Activated naive CD4-positive, alpha-beta T cell treated with anti-CD3 and anti-CD28 coated beads for 36 hours (primary cell): ENCODE measurements at regions of chr21 and their contacts with region 1.

Region 1: GRCh38 chr21:38913120-38913892 is 107.6 kb downstream of the ETS2 start:
- DNase-seq: peak; percentile 17
- H3K4me3 Mint-ChIP-seq: no peak overlapping the region
- H3K27ac Mint-ChIP-seq: no peak overlapping the region
- H3K4me1 Mint-ChIP-seq: peaks cover 7% of the 10 kb centered on the region
- H3K27me3 Mint-ChIP-seq: peaks cover 5% of the 10 kb centered on the region

Region 2: GRCh38 chr21:38669176-38669575 is 244.1 kb before region 1 on chr21:
- CTCF ChIA-PET with region 1: no interaction called
- intact Hi-C with region 1: no loop called
- DNase-seq: peak; percentile 22
- H3K4me3 Mint-ChIP-seq: no peak overlapping the region
- H3K27ac Mint-ChIP-seq: no peak overlapping the region
- H3K4me1 Mint-ChIP-seq: no peaks in the 10 kb centered on the region
- H3K27me3 Mint-ChIP-seq: peaks cover 10% of the 10 kb centered on the region

Region 3: DNA sequence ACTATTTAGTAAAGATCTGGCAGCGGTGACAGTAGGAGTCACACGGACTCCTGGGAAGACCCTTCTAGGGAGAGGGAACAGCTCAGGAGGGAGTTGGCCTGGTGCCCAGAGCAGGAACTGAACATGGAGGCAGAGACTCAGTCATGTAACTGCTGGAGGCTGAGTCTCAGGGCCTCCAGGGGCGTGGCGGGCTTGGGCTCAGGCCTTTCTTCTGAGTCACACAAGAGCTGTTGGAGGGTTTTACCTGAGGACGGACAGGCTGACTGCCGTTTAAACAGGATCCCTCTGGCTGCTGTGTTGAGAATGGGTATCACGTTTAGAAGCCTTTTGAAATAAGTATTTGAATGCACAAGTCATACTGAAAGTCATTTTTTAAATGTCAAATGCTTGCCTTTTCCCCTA is 114.8 kb before region 1 on chr21:
- CTCF ChIA-PET with region 1: no interaction called
- intact Hi-C with region 1: no loop called
- DNase-seq: peak; percentile 30
- H3K4me3 Mint-ChIP-seq: no peak overlapping the region
- H3K27ac Mint-ChIP-seq: no peak overlapping the region
- H3K4me1 Mint-ChIP-seq: peaks cover 6% of the 10 kb centered on the region
- H3K27me3 Mint-ChIP-seq: peaks cover 2% of the 10 kb centered on the region

Region 4: DNA sequence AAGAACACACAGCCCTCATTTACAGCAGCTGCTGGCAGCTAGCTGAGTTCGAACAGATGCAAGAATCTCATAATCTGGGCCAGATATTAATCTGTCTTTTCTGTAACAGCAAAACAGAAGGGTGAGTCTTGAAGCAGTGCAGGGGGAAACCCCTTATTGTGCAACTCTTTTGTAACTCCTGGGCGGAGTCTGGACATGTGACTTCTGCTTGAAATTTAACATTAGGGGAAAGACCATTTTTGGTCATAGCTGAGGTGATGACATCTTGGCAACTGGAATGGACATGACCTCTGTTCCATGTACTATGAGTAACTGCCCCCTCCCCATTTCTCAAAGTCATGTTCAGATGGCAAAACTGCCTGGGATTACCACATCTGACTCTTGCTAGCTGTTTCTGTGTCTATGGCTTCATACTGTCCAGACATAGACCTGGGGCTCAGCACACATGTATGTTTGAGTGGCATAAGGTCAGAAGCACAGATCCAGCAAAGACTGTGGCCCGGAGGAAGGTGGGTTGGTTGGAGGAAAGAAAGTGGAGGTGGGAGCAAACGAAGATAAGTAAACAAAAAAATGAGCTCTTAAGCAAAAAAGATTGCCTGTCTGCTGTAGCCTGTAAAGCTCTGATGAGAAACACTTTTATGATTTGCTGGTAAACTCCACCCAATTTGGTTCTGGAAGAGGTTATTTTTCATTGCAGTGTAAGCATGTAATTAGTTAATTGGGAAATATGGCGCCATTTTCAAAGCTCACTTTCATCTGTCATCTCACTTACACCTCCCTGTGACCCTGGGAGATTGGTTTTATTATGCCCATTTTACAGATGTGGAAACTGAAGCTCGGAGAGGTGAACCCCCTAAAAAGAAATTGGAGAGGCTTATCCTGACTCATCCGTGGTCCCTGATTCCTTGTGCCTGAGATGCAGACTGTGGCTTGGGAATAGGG is 81.5 kb before region 1 on chr21:
- CTCF ChIA-PET with region 1: no interaction called
- intact Hi-C with region 1: loop called (anchors 2 kb)
- DNase-seq: peak; percentile 87
- H3K4me3 Mint-ChIP-seq: no peak overlapping the region
- H3K27ac Mint-ChIP-seq: peak overlapping the region; percentile 75
- H3K4me1 Mint-ChIP-seq: peaks cover 17% of the 10 kb centered on the region
- H3K27me3 Mint-ChIP-seq: no peaks in the 10 kb centered on the region